ENCODE measurements at regions of chr11 and their contacts with region 1.

Region 1: DNA sequence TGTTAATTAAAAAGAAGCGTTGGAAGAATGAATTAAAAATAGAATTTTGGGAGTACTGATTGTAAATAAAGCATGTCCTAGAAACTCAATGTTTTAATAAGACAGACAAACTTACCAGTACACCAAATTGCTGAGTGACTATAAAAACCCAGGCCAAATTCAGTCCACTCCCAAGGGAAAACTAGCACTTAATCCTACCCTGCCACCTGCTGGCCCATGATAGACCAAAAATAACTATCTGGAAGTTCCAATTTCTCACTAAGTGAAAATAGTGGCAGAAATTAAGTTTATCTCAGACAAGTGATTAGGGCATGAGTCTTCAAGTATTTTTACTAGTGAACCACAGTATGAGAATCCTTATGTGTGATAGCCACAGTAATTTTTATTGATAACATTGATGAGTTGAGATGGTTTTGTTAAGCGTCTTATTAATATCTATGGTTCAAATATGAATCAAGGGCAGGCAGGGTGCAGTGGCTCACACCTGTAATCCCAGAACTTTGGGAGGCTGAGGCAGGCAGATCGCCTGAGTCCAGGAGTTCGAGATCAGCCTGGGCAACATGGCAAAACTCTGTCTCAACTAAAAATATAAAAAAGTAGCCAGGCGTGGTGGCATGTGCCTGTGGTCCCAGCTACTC is 9.8 kb upstream of the DDX10 start:
- DNase-seq: no peak
- H3K4me3 ChIP-seq: no peak overlapping the region
- CTCF ChIP-seq: no peak
- POLR2A ChIP-seq: no peak

Region 2: DNA sequence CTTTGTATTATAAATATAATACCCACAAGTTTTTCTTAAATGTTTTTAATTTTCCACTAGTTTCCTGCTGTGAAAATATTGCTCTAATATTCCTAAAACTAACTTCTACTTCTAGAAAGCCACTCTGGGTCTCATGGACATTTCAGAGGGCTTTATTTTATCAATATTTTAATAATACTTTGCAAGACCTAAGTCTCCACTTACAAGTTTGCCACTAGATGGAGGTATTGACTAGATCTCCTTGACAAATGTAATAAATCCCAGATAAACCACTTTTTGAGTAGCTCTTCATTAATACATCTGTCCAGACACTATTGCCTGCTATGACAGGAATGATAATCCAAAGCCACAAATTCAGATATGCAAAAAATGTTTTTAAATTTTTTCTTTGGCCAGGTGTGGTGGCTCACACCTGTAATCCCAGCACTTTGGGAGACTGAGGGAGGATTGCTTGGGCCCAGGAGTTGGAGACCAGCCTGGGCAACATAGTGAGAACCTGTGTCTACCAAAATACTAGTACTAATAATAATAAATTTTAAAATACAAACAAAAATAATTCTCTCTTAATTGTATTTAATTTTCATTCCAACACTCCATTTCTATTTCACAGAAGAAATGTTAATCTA is 537.3 kb before region 1 on chr11:
- intact Hi-C with region 1: loop called (anchors 10 kb)
- DNase-seq: no peak
- H3K4me3 ChIP-seq: no peak overlapping the region
- CTCF ChIP-seq: no peak
- POLR2A ChIP-seq: no peak

Measured in lower leg skin (tissue), 4 donors.